ENCODE measurements at regions of chr20 and their contacts with region 1.

Region 1: DNA sequence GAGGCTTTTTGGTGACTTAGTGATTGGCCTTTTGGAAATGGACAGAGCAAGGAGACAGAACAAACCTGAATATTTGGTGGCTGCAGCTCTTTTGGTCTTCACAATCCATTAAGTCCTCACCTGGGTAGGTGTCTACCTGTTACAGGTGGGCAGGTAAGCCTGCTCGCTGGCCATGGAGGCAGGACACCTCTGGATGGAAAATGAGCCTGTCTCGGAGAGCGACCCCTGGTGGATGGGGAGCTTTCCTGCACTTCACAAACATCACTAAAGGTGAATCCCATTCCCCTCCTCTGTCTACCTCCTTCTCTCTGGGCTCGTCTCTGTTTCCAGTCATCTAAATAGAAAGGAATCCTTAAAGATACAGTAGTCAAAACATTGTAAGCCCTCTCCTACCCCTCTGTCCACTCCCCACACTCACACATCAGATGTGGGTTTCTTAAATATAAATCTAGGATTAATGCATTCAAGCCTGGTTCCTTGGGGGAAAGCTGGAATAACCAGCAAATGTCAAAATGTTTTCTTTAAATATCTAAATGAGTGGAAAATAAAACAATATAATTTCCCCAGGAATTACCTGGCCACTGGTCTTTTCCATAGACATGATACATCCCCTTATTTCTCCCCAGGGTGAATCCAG is 304.9 kb downstream of the CDH26 start:
- DNase-seq: peak; percentile 61
- ATAC-seq: peak; percentile 51
- H3K4me3 Mint-ChIP-seq: no peak overlapping the region
- H3K27ac Mint-ChIP-seq: no peak overlapping the region
- H3K4me1 Mint-ChIP-seq: peaks cover 12% of the 10 kb centered on the region
- H3K27me3 Mint-ChIP-seq: peaks cover 5% of the 10 kb centered on the region

Region 2: GRCh38 chr20:60210779-60211617 is 52.1 kb before region 1 on chr20:
- CTCF ChIA-PET with region 1: interaction called, 16 read pairs
- POLR2A ChIA-PET with region 1: no interaction called
- DNase-seq: peak; percentile 71
- ATAC-seq: peak; percentile 91
- H3K4me3 Mint-ChIP-seq: no peak overlapping the region
- H3K27ac Mint-ChIP-seq: no peak overlapping the region
- H3K4me1 Mint-ChIP-seq: peaks cover 3% of the 10 kb centered on the region
- H3K27me3 Mint-ChIP-seq: no peaks in the 10 kb centered on the region

Region 3: GRCh38 chr20:60249436-60249835 is 13.6 kb before region 1 on chr20:
- CTCF ChIA-PET with region 1: interaction called, 12 read pairs
- POLR2A ChIA-PET with region 1: no interaction called
- DNase-seq: no peak
- ATAC-seq: no peak
- H3K4me3 Mint-ChIP-seq: no peak overlapping the region
- H3K27ac Mint-ChIP-seq: no peak overlapping the region
- H3K4me1 Mint-ChIP-seq: peaks cover 6% of the 10 kb centered on the region
- H3K27me3 Mint-ChIP-seq: peaks cover 2% of the 10 kb centered on the region

Measured in activated CD8-positive, alpha-beta T cell treated with anti-CD3 and anti-CD28 coated beads, Interleukin-2, amount 10 ng/mL, durations not matched to agents 7 days and 5 days (primary cell).